Naive thymus-derived CD4-positive, alpha-beta T cell (primary cell): ENCODE measurements at regions of chr7 and their contacts with region 1.

Region 1: GRCh38 chr7:102404005-102404861 is 8.1 kb downstream of the PRKRIP1 start:
- DNase-seq: peak in 7 of 9 donors; percentile 48 to 71 (median 62)
- ATAC-seq: peak; percentile 100
- H3K4me3 ChIP-seq: no peak overlapping the region
- H3K4me3 Mint-ChIP-seq: no peak overlapping the region
- H3K27ac ChIP-seq: no peak overlapping the region
- H3K27ac Mint-ChIP-seq: peak overlapping the region in 5 of 9 donors; percentile 8 to 38 (median 25)
- H3K4me1 ChIP-seq: no peaks in the 10 kb centered on the region
- H3K4me1 Mint-ChIP-seq: peaks cover 0 to 14% (median 8%) of the 10 kb centered on the region in 7 donors
- H3K27me3 ChIP-seq: no peaks in the 10 kb centered on the region
- H3K27me3 Mint-ChIP-seq: no peaks in the 10 kb centered on the region

Region 2: GRCh38 chr7:102433219-102434038 is 29.2 kb after region 1 on chr7 and contains the start of gene ORAI2:
- CTCF ChIA-PET with region 1: interaction called, 7 read pairs
- POLR2A ChIA-PET with region 1: interaction called, 510 read pairs
- intact Hi-C with region 1: loop called (anchors 1 kb)
- DNase-seq: peak; percentile 72 to 94 (median 81)
- ATAC-seq: peak; percentile 86
- H3K4me3 ChIP-seq: peak within 1 kb of the TSS; percentile 59
- H3K4me3 Mint-ChIP-seq: peak within 1 kb of the TSS; percentile 76 to 91 (median 88)
- H3K27ac ChIP-seq: peak within 1 kb of the TSS; percentile 96
- H3K27ac Mint-ChIP-seq: peak within 1 kb of the TSS; percentile 97 to 100 (median 99)
- H3K4me1 ChIP-seq: peaks cover 34 to 55% of the 10 kb centered on the region in 2 donors
- H3K4me1 Mint-ChIP-seq: peaks cover 38 to 62% (median 49%) of the 10 kb centered on the region in 7 donors
- H3K27me3 ChIP-seq: no peaks in the 10 kb centered on the region
- H3K27me3 Mint-ChIP-seq: no peaks in the 10 kb centered on the region
- total RNA-seq, gene ORAI2: 19.9 to 72.6 (median 26.2) TPM

Region 3: GRCh38 chr7:102450242-102450641 is 46.0 kb after region 1 on chr7:
- CTCF ChIA-PET with region 1: interaction called, 26 read pairs
- POLR2A ChIA-PET with region 1: interaction called, 6 read pairs
- intact Hi-C with region 1: loop called (anchors 1 kb)
- DNase-seq: peak in 7 of 9 donors; percentile 50 to 65 (median 57)
- ATAC-seq: peak; percentile 91
- H3K4me3 ChIP-seq: no peak overlapping the region
- H3K4me3 Mint-ChIP-seq: no peak overlapping the region
- H3K27ac ChIP-seq: no peak overlapping the region
- H3K27ac Mint-ChIP-seq: peak overlapping the region in 5 of 9 donors; percentile 36 to 75 (median 62)
- H3K4me1 ChIP-seq: no peaks in the 10 kb centered on the region
- H3K4me1 Mint-ChIP-seq: peaks cover 0 to 5% (median 2%) of the 10 kb centered on the region in 7 donors
- H3K27me3 ChIP-seq: no peaks in the 10 kb centered on the region
- H3K27me3 Mint-ChIP-seq: no peaks in the 10 kb centered on the region